Caco-2 (cell line): ENCODE measurements at regions of chr7 and their contacts with region 1.

Region 1: DNA sequence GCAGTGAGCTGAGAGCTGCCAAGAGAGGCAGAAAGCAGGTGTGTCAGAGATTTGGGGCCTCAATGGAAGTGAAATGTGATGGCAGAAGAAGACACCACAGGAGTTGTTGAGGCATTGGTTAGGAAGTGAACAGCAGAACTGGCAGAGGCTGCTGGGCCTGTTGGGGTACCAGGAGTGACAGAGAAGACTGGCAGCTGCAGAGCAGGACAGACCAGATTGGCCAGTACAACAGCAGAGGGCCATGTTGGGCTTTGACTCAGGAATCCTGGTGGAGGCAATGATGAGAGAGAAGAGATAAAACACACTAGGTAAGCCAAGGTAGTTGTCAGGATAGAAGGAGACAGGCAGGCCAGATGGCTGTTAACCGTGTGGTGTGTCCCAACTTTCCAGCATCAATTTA is 19.9 kb upstream of the HERPUD2 start:
- DNase-seq: peak; percentile 67 to 78
- H3K4me3 ChIP-seq: no peak overlapping the region
- H3K4me3 Mint-ChIP-seq: peak overlapping the region; percentile 8
- H3K27ac Mint-ChIP-seq: peak overlapping the region; percentile 63
- H3K4me1 ChIP-seq: peaks cover 64% of the 10 kb centered on the region
- H3K4me1 Mint-ChIP-seq: peaks cover 43% of the 10 kb centered on the region
- H3K27me3 ChIP-seq: no peaks in the 10 kb centered on the region
- H3K27me3 Mint-ChIP-seq: no peaks in the 10 kb centered on the region
- CTCF ChIP-seq: peak; percentile 11 to 28

Region 2: GRCh38 chr7:35736725-35737124 is 21.9 kb after region 1 on chr7:
- CTCF ChIA-PET with region 1: interaction called, 7 read pairs
- POLR2A ChIA-PET with region 1: no interaction called
- intact Hi-C with region 1: loop called (anchors 2 kb)
- DNase-seq: peak; percentile 58 to 74
- H3K4me3 ChIP-seq: no peak overlapping the region
- H3K4me3 Mint-ChIP-seq: no peak overlapping the region
- H3K27ac Mint-ChIP-seq: peak overlapping the region; percentile 81
- H3K4me1 ChIP-seq: peaks cover 42% of the 10 kb centered on the region
- H3K4me1 Mint-ChIP-seq: peaks cover 35% of the 10 kb centered on the region
- H3K27me3 ChIP-seq: no peaks in the 10 kb centered on the region
- H3K27me3 Mint-ChIP-seq: no peaks in the 10 kb centered on the region
- CTCF ChIP-seq: no peak